HAP-1 (cell line): ENCODE measurements at regions of chr1 and their contacts with region 1.

Region 1: GRCh38 chr1:235093696-235094592 is 34.7 kb downstream of the TOMM20 start:
- DNase-seq: peak; percentile 63 to 88
- H3K4me3 ChIP-seq: no peak overlapping the region
- H3K4me1 ChIP-seq: peaks cover 10% of the 10 kb centered on the region
- H3K27me3 ChIP-seq: no peaks in the 10 kb centered on the region

Region 2: DNA sequence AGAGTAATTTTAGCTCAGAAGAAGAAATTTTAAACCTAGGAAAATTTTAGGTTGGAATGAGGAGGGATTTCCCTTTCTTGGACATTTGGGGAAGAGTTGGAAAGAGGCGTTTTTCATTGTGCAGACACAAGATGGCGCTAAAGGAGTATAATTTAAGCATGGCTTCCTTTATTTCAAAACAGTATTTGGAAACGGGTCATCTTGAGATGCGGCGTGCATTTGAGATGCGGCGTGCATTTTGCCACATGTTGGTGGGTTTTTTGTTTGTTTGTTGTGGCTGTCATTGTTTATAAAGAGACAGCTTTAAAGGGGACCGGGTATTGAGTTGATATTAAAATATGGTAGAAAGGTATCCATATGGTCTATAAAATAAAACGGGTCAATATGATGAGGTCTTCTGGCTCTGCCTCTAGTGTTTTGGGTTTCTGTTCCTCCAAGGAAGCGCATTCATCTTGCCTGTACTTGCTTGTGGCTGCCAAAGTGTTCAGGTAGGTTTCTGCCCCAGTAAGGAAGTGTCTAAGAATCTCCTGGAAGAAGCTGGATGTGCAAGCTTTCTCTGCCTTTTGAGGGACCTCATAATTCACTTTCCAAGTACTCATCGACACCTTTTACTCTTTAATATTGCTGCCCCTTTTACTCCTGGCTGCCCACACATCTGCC is 979.2 kb before region 1 on chr1:
- in situ Hi-C with region 1: loop called (anchors 25 kb)
- DNase-seq: peak; percentile 56 to 62
- H3K4me3 ChIP-seq: no peak overlapping the region
- H3K4me1 ChIP-seq: peaks cover 3% of the 10 kb centered on the region; the same call in 1 of the 2 replicates
- H3K27me3 ChIP-seq: 0 out of 2 replicates have a peak, but pooled peaks cover 3% of the 10 kb centered on the region

Region 3: DNA sequence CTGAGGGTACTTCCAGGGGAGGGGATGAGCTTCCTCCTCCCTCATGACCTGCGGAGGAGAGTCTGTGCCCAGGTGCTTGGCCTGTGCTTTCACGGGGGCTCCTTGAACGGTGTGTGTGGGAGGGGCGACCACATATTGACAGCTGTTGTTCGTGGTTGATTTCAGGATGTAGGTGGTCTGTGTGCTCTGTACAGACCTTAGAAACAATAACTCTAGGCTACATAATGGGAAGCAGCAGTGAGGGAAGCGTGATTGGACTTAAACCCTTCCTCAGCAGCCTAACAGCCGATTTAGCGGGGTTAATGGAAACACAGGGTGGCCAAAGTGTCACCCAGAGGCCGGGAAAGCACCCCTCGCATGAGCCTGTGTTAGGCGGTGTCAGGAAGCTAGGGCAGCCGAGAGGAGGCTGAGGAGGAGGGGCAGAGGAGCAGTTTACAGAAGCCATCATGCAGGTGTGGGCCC is 329.3 kb after region 1 on chr1:
- in situ Hi-C with region 1: loop called (anchors 10 kb)
- DNase-seq: no peak
- H3K4me3 ChIP-seq: no peak overlapping the region
- H3K4me1 ChIP-seq: no peaks in the 10 kb centered on the region
- H3K27me3 ChIP-seq: no peaks in the 10 kb centered on the region